Dorsolateral prefrontal cortex (tissue), 120 donors: ENCODE measurements at regions of chr13 and their contacts with region 1.

Region 1: GRCh38 chr13:60163478-60164233 is at the start of gene DIAPH3:
- DNase-seq: peak; percentile 94 to 99 (median 96)
- H3K4me3 ChIP-seq: peak within 1 kb of the TSS; percentile 56 to 96 (median 78)
- H3K27ac ChIP-seq: peak within 1 kb of the TSS in 58 of 59 donors; percentile 9 to 94 (median 88)
- H3K27me3 ChIP-seq: peaks cover 0 to 9% (median 0%) of the 10 kb centered on the region in 45 donors
- CTCF ChIP-seq: peak in 14 of 56 donors; percentile 7 to 36 (median 20)
- total RNA-seq, gene DIAPH3: 0.43 to 5.7 (median 1.9) TPM

Region 2: DNA sequence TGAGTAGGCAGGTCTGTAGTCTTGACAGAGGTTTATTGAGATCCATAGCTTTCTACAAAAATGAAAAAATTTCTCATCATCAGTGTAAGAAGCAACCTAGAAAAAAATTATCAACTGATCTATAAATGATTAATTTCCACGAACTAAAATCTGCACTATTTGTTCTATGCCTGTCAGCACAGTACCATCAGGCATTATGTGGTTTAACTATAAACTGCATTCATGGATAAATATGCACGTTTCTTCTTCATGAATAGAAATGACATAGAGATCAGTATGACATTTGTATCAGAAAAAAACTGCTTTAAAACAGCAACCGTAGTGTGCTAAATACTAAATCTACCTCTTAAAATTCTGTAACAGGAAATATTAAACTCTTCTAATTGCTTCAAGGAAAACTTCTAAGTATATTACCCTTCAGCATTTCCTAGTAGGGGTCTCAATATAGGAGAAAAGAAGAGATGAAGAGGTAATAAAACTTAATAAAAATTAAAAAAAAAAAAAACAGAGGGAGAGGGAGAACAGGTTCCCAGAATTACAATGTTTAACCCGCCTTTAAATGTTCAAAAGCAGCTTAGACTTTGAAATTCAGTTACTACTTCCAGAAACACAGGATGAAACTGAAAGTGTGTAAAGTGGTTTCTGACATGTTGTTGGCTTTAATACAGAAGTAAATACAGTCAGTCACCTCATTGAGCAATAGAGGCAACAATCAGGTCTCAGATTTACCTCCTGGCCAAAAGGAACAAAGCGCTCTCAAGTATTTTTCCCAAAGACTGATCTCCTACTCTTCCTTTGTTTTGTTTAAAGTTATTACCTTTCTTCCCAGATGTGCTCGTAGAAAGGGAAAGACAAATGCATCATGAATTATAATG is 144.3 kb before region 1 on chr13:
- intact Hi-C with region 1: no loop called
- DNase-seq: no peak
- H3K4me3 ChIP-seq: no peak overlapping the region
- H3K27ac ChIP-seq: no peak overlapping the region
- H3K27me3 ChIP-seq: no peaks in the 10 kb centered on the region
- CTCF ChIP-seq: no peak

Region 3: DNA sequence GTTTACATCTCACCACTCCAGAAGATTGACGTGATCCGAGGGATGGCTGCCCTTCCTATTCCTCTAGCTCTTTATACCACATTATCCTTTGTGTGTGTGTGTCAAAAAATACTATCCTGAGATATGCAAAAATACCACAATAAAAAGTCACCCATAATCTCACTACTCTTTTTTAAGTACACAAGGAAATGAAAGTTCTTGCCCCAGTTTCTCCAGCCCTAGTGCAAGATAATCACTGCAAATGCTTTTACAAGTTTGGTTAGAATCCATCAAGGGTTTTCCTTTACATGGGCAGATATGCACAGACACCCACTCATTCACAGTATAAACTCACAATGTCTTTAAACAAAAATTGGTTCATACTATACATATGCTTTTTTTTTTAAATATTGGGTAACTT is 89.3 kb before region 1 on chr13:
- intact Hi-C with region 1: no loop called
- DNase-seq: no peak
- H3K4me3 ChIP-seq: no peak overlapping the region
- H3K27ac ChIP-seq: no peak overlapping the region
- H3K27me3 ChIP-seq: peaks cover 0 to 9% (median 0%) of the 10 kb centered on the region in 45 donors
- CTCF ChIP-seq: no peak

Region 4: DNA sequence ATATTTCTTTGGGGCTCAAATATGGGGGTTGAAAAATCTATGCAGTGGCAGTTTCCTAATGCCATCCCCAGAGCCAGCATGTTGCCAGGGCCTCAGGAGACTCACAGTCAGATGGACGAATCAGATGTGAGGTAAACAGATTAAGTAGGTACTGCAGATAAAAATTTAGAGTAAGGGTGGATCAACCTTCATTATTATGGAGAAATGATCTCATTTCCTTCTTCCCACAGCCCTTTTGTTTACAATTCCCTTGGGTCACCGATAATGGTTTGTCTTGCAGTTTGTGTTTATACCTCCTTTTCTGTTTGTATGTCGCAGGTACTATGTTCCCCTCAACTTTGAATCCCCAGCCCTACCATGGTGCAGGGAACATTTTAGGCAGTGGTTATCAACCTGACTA is 19.9 kb before region 1 on chr13:
- intact Hi-C with region 1: no loop called
- DNase-seq: no peak
- H3K4me3 ChIP-seq: no peak overlapping the region
- H3K27ac ChIP-seq: no peak overlapping the region
- H3K27me3 ChIP-seq: peaks cover 0 to 9% (median 0%) of the 10 kb centered on the region in 45 donors
- CTCF ChIP-seq: no peak

Region 5: DNA sequence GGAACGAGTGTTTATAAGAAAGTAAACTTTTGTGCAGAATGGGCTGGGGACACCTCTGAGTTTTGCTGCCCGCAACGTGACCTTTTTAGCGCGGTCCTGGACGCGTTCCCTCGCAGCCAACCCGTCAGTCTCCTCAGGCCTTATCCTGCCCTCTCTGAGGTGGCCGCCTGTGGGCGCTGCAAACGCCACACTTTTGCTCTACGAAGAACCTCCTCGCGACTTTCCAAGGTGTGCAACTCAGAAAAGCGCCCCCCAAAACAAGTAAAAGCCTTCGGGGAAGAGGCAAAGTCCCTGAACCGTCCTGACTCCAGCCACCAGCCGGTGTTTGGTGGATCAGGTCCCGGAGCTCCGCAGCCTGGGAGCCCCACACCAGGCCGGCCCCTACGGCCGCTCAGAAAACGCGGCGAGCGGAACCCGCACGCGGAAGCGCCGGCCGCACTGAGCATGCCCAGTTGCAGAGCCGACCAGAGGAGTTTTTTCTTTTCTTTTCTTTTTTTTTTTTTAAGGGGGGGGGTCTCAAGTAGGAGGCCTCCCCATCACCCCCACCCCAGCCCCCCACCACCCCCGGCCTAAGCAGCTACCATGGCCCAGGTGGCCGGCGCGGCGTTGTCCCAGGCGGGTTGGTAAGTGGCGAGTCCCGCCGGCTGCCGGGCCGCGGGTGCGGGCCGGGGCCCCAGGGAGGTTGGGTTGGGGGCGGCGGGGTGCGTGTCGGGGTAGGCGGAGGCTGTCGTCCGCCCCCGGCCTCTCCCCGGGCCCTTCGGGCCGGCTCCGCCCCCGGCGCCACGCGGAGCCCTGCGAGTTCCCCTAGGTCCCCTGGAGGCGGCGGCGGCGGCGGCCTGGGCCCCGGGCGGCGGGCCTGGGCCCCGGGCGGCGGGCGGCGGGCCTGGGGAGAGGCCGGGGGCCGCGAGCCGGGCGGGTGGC is 233.4 kb after region 1 on chr13 and contains the start of gene TDRD3:
- intact Hi-C with region 1: loop called (anchors 5 to 10 kb)
- DNase-seq: peak; percentile 64 to 86 (median 78)
- H3K4me3 ChIP-seq: peak within 1 kb of the TSS; percentile 56 to 95 (median 81)
- H3K27ac ChIP-seq: peak within 1 kb of the TSS; percentile 78 to 99 (median 97)
- H3K27me3 ChIP-seq: no peaks in the 10 kb centered on the region
- CTCF ChIP-seq: peak; percentile 33 to 82 (median 67)
- total RNA-seq, gene TDRD3: 26.7 to 60.8 (median 44.2) TPM